CD8-positive, alpha-beta memory T cell (primary cell): ENCODE measurements at regions of chr9 and their contacts with region 1.

Region 1: GRCh38 chr9:5437254-5438216 is at the start of gene PLGRKT:
- DNase-seq: peak; percentile 84 to 95 (median 88)
- H3K4me3 ChIP-seq: peak within 1 kb of the TSS; percentile 89
- H3K4me3 Mint-ChIP-seq: peak within 1 kb of the TSS; percentile 90 to 97 (median 95)
- H3K27ac ChIP-seq: peak within 1 kb of the TSS; percentile 82
- H3K27ac Mint-ChIP-seq: peak within 1 kb of the TSS; percentile 97 to 100 (median 99)
- H3K4me1 ChIP-seq: peaks cover 30% of the 10 kb centered on the region
- H3K4me1 Mint-ChIP-seq: peaks cover 29 to 41% (median 37%) of the 10 kb centered on the region in 3 donors
- H3K27me3 ChIP-seq: no peaks in the 10 kb centered on the region
- H3K27me3 Mint-ChIP-seq: no peaks in the 10 kb centered on the region
- total RNA-seq, gene PLGRKT: 34.3 to 36.1 TPM

Region 2: GRCh38 chr9:5178126-5178805 is 259.3 kb before region 1 on chr9:
- CTCF ChIA-PET with region 1: no interaction called
- POLR2A ChIA-PET with region 1: interaction called, 12 read pairs
- DNase-seq: peak in 3 of 5 donors; percentile 52 to 67 (median 53)
- H3K4me3 ChIP-seq: no peak overlapping the region
- H3K4me3 Mint-ChIP-seq: peak overlapping the region in 4 of 7 donors; percentile 9 to 56 (median 30)
- H3K27ac ChIP-seq: no peak overlapping the region
- H3K27ac Mint-ChIP-seq: peak overlapping the region in 4 of 8 donors; percentile 4 to 66 (median 14)
- H3K4me1 ChIP-seq: peaks cover 16% of the 10 kb centered on the region
- H3K4me1 Mint-ChIP-seq: peaks cover 11 to 21% (median 18%) of the 10 kb centered on the region in 3 donors
- H3K27me3 ChIP-seq: no peaks in the 10 kb centered on the region
- H3K27me3 Mint-ChIP-seq: no peaks in the 10 kb centered on the region

Region 3: DNA sequence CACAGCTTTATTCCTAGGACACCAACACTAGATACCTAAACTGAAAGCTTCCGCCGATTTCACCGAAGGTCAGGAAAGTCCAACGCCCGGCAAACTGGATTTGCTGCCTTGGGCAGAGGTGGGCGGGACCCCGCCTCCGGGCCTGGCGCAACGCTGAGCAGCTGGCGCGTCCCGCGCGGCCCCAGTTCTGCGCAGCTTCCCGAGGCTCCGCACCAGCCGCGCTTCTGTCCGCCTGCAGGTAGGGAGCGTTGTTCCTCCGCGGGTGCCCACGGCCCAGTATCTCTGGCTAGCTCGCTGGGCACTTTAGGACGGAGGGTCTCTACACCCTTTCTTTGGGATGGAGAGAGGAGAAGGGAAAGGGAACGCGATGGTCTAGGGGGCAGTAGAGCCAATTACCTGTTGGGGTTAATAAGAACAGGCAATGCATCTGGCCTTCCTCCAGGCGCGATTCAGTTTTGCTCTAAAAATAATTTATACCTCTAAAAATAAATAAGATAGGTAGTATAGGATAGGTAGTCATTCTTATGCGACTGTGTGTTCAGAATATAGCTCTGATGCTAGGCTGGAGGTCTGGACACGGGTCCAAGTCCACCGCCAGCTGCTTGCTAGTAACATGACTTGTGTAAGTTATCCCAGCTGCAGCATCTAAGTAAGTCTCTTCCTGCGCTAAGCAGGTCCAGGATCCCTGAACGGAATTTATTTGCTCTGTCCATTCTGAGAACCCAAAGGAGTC is 13.0 kb after region 1 on chr9 and contains the start of gene CD274:
- CTCF ChIA-PET with region 1: interaction called, 33 read pairs
- POLR2A ChIA-PET with region 1: interaction called, 33 read pairs
- DNase-seq: peak; percentile 66 to 85 (median 79)
- H3K4me3 ChIP-seq: peak within 1 kb of the TSS; percentile 88
- H3K4me3 Mint-ChIP-seq: peak within 1 kb of the TSS; percentile 86 to 98 (median 96)
- H3K27ac ChIP-seq: peak within 1 kb of the TSS; percentile 92
- H3K27ac Mint-ChIP-seq: peak within 1 kb of the TSS; percentile 92 to 99 (median 98)
- H3K4me1 ChIP-seq: peaks cover 42% of the 10 kb centered on the region
- H3K4me1 Mint-ChIP-seq: peaks cover 53 to 91% (median 85%) of the 10 kb centered on the region in 3 donors
- H3K27me3 ChIP-seq: no peaks in the 10 kb centered on the region
- H3K27me3 Mint-ChIP-seq: no peaks in the 10 kb centered on the region
- total RNA-seq, gene CD274: 13.2 to 17.6 TPM

Region 4: DNA sequence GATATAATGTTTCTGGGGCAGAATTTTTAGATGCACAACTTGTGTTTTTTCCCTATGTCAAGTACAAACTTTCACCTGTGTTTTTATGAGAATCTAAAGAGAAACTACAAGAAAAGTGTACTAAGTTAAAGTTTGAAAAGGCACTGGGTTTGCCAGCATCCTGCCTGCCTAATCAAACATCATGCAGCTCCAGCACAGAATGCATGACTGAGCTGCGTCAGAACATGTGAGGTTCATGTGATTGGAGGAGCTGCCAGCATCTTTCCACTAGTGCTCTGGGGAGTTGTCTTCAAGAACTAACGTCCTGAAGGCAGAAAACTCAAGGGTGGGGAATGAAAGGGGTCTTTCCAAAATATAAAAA is 145.3 kb after region 1 on chr9:
- CTCF ChIA-PET with region 1: interaction called, 16 read pairs
- POLR2A ChIA-PET with region 1: interaction called, 3 read pairs
- DNase-seq: peak in 2 of 5 donors; percentile 33 to 49
- H3K4me3 ChIP-seq: no peak overlapping the region
- H3K4me3 Mint-ChIP-seq: peak overlapping the region in 1 of 7 donors; percentile 9
- H3K27ac ChIP-seq: no peak overlapping the region
- H3K27ac Mint-ChIP-seq: peak overlapping the region in 4 of 8 donors; percentile 14 to 43 (median 20)
- H3K4me1 ChIP-seq: peaks cover 28% of the 10 kb centered on the region
- H3K4me1 Mint-ChIP-seq: peaks cover 39 to 56% (median 41%) of the 10 kb centered on the region in 3 donors
- H3K27me3 ChIP-seq: no peaks in the 10 kb centered on the region
- H3K27me3 Mint-ChIP-seq: peaks cover 0 to 2% of the 10 kb centered on the region in 2 donors